ENCODE measurements at regions of chr22 and their contacts with region 1.

Region 1: DNA sequence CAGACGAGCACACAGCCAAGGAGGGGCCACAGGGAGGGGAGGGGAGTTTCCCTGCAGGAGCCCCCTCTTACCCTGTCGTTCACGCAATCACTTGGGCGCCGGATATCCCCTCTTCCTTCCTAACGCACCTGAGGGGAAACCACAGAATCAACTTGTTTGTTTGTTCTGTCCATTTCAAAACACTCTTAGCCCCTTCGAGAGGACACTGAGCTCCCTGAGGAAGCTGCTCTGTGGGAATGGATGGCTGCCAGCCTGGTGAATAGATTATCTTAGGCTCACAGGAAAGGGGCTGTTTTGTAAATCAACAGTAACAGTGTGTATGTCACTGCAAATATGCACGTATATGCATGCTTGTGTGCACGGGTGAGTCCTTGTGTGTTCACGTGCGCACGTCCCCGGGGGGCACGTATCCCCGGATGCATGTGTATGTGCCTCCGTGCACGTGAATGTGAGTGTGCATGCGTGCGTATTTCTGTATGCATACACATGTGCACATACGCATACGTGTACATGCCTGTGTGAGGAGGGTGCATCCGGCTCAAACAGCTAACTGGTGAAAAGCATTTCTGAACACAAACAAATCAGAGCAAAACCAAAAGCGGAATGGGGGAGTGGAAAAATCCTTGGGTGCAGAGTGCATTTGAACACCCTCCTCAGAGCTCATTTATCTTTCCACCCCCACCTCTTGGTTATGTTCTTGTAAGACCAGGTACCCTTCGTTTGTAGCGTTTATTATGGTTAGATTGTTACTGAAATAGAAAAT is 7.2 kb downstream of the ARSA start:
- DNase-seq: peak; percentile 87
- ATAC-seq: peak; percentile 70
- H3K4me3 Mint-ChIP-seq: peak overlapping the region; percentile 80
- H3K27ac Mint-ChIP-seq: peak overlapping the region; percentile 97
- H3K4me1 Mint-ChIP-seq: peaks cover 40% of the 10 kb centered on the region
- H3K27me3 Mint-ChIP-seq: no peaks in the 10 kb centered on the region

Region 2: GRCh38 chr22:50233223-50233622 is 387.6 kb before region 1 on chr22:
- CTCF ChIA-PET with region 1: no interaction called
- POLR2A ChIA-PET with region 1: no interaction called
- intact Hi-C with region 1: no loop called
- DNase-seq: no peak
- ATAC-seq: no peak
- H3K4me3 Mint-ChIP-seq: no peak overlapping the region
- H3K27ac Mint-ChIP-seq: no peak overlapping the region
- H3K4me1 Mint-ChIP-seq: peaks cover 10% of the 10 kb centered on the region
- H3K27me3 Mint-ChIP-seq: no peaks in the 10 kb centered on the region

Region 3: GRCh38 chr22:50270666-50271394 is 349.9 kb before region 1 on chr22:
- CTCF ChIA-PET with region 1: interaction called, 6 read pairs
- POLR2A ChIA-PET with region 1: no interaction called
- intact Hi-C with region 1: loop called in 1 of 2 experiments (anchors 1 kb)
- DNase-seq: peak; percentile 86
- ATAC-seq: peak; percentile 46
- H3K4me3 Mint-ChIP-seq: peak overlapping the region; percentile 65
- H3K27ac Mint-ChIP-seq: no peak overlapping the region
- H3K4me1 Mint-ChIP-seq: peaks cover 13% of the 10 kb centered on the region
- H3K27me3 Mint-ChIP-seq: peaks cover 4% of the 10 kb centered on the region

Region 4: DNA sequence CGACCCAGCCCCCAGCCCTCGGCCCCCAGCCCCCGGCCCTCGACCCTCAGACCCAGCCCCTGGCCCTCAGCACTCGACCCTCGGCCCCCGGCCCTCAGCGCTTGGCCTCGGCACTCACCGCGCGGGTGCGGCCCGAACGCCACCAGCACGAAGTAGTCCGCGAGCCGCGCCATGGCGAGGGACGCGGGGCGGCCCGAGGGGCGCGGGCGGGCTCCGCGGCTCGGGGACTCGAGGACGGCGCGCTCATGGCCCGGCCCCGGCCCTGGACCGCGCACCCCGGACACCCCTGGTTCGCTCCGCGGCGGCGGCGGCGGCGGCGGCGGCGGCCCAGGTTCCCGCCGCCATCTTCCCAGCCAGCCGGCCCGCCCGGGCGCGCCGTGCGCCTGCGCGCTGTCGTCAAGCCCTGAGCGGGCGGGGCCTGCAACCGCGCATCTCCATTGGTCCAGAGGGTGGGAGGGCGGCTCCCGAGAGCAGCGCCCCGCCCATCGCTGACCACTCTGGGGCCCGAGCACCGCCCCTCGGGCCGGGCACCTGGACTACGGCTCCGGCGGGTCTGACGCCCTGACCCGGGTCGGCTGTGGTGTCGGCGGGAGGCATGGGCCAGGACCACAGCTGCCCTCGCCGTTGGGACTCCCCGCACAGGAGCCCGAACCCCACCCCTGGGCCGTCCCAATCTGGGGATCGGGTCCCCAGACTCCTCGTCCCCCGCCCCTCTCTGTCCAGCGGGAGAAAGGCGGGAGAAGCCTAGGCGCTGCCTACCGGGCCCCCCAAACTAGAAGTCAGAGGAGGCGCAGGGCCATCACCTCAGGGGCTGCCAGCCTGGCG is 145.9 kb before region 1 on chr22 and contains the start of gene SBF1:
- CTCF ChIA-PET with region 1: interaction called, 3 read pairs
- POLR2A ChIA-PET with region 1: interaction called, 4 read pairs
- intact Hi-C with region 1: loop called in 1 of 2 experiments (anchors 1 kb)
- DNase-seq: peak; percentile 95
- ATAC-seq: peak; percentile 78
- H3K4me3 Mint-ChIP-seq: peak within 1 kb of the TSS; percentile 89
- H3K27ac Mint-ChIP-seq: peak within 1 kb of the TSS; percentile 83
- H3K4me1 Mint-ChIP-seq: peaks cover 42% of the 10 kb centered on the region
- H3K27me3 Mint-ChIP-seq: peaks cover 2% of the 10 kb centered on the region
- total RNA-seq, gene SBF1: 97.6 TPM

Region 5: DNA sequence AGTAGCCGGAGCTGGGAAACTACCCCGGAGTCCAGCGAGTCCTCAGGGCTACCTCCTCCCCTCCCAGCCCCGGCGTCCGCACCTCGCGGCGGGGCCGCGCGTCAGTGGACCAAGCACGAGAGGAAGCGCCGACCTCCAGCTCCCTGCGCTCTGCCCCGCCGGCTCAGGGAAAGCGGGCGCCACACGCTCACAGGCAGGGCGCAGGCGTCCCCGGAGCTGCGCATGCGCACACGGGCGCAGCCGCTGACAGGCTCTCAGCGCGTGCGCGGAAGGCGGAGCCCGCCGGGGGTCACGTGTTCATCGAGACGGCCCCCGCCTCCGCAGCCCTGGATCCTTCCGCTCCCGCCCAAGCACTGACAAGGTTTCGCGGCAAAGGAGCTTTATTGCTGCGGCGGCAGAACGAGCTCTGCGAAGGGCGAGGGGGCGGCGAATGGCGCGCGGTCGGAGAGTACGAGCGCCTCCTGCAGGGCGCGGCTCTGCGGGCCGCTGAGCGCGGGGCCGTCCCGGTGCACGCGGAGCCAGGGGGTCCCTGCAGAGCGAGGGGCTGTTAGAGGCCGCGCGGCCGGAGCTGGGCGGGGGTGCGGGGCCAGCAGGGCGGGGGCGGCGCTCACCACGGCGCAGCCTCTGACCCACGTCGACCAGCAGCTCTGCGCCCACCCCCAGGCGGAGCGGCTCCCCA is 95.2 kb before region 1 on chr22 and contains the start of gene SCO2:
- CTCF ChIA-PET with region 1: interaction called, 27 read pairs
- POLR2A ChIA-PET with region 1: interaction called, 22 read pairs
- intact Hi-C with region 1: loop called (anchors 1 kb)
- DNase-seq: peak; percentile 99
- ATAC-seq: peak; percentile 56
- H3K4me3 Mint-ChIP-seq: peak within 1 kb of the TSS; percentile 77
- H3K27ac Mint-ChIP-seq: peak within 1 kb of the TSS; percentile 87
- H3K4me1 Mint-ChIP-seq: peaks cover 34% of the 10 kb centered on the region
- H3K27me3 Mint-ChIP-seq: no peaks in the 10 kb centered on the region
- total RNA-seq, gene SCO2: 2.4 to 5.6 TPM

Region 6: DNA sequence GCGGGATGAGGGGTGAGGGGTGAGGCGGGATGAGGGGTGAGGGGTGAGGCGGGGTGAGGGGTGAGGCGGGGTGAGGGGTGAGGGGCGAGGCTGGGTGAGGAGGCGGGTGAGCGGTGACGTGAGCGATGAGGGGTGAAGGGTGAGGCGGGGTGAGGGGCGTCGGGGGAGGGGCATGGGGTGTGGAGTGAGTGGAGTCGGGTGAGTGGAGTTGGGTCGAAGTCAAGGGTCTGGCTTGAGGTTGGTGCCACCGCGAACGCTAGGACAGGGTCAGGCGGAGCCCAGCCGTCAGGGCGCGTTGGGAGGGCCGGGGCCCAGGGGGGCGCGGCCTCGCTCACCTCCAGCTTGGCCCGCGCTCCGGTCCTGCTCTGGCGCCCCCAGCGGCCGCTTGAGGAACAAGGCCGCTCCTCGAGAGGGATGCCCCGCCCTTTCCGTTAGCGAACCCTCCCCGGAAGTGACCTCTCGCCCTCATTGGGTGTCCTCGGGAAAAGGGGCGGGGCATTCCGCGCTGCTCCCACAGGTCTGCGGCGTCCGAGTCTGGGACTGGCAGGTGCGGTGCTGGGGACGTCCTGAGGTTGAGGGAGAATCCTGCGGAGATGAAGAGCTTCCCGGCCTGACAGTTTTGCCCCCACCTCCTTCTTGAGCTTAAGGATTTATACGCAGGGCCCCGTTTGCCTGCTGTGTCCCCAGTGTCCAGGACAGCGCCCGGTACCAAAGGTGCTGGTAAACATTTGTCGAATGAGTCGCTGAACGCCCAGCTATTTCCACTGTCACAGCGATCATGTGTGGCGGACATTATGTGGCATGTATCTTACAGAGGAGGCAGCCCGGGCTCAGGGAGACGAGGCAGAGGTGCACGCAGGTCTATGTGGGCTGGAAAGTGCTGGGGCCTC is 58.0 kb before region 1 on chr22 and contains the start of gene SYCE3:
- CTCF ChIA-PET with region 1: interaction called, 10 read pairs
- POLR2A ChIA-PET with region 1: interaction called, 4 read pairs
- intact Hi-C with region 1: loop called in 1 of 2 experiments (anchors 1 kb)
- DNase-seq: peak; percentile 99
- ATAC-seq: peak; percentile 96
- H3K4me3 Mint-ChIP-seq: peak within 1 kb of the TSS; percentile 83
- H3K27ac Mint-ChIP-seq: peak within 1 kb of the TSS; percentile 84
- H3K4me1 Mint-ChIP-seq: peaks cover 19% of the 10 kb centered on the region
- H3K27me3 Mint-ChIP-seq: no peaks in the 10 kb centered on the region
- total RNA-seq, gene SYCE3: 3.8 TPM

Region 7: GRCh38 chr22:50595189-50595588 is 25.6 kb before region 1 on chr22:
- CTCF ChIA-PET with region 1: no interaction called
- POLR2A ChIA-PET with region 1: no interaction called
- intact Hi-C with region 1: no loop called
- DNase-seq: no peak
- ATAC-seq: no peak
- H3K4me3 Mint-ChIP-seq: no peak overlapping the region
- H3K27ac Mint-ChIP-seq: no peak overlapping the region
- H3K4me1 Mint-ChIP-seq: peaks cover 4% of the 10 kb centered on the region
- H3K27me3 Mint-ChIP-seq: peaks cover 5% of the 10 kb centered on the region

Region 8: GRCh38 chr22:50705208-50705691 is 84.5 kb after region 1 on chr22:
- CTCF ChIA-PET with region 1: no interaction called
- POLR2A ChIA-PET with region 1: no interaction called
- intact Hi-C with region 1: no loop called
- DNase-seq: no peak
- ATAC-seq: no peak
- H3K4me3 Mint-ChIP-seq: no peak overlapping the region
- H3K27ac Mint-ChIP-seq: no peak overlapping the region
- H3K4me1 Mint-ChIP-seq: peaks cover 14% of the 10 kb centered on the region
- H3K27me3 Mint-ChIP-seq: no peaks in the 10 kb centered on the region